CD4-positive, alpha-beta T cell (primary cell): ENCODE measurements at regions of chr16 and their contacts with region 1.

Region 1: GRCh38 chr16:89490387-89491237 is at the start of gene ANKRD11:
- DNase-seq: peak; percentile 96 to 100 (median 98)
- ATAC-seq: peak; percentile 85
- H3K4me3 ChIP-seq: peak within 1 kb of the TSS; percentile 73
- H3K4me3 Mint-ChIP-seq: peak within 1 kb of the TSS; percentile 98
- H3K27ac ChIP-seq: peak within 1 kb of the TSS; percentile 81 to 95
- H3K27ac Mint-ChIP-seq: peak within 1 kb of the TSS; percentile 97
- H3K4me1 ChIP-seq: peaks cover 58% of the 10 kb centered on the region
- H3K4me1 Mint-ChIP-seq: peaks cover 59% of the 10 kb centered on the region
- H3K27me3 ChIP-seq: no peaks in the 10 kb centered on the region
- H3K27me3 Mint-ChIP-seq: no peaks in the 10 kb centered on the region
- CTCF ChIP-seq: no peak
- total RNA-seq, gene ANKRD11: 200 to 211 TPM

Region 2: GRCh38 chr16:88856828-88857733 is 633.5 kb before region 1 on chr16 and contains the starts of genes GALNS and TRAPPC2L:
- CTCF ChIA-PET with region 1: no interaction called
- POLR2A ChIA-PET with region 1: no interaction called
- intact Hi-C with region 1: no loop called
- DNase-seq: peak; percentile 97 to 99 (median 98)
- ATAC-seq: peak; percentile 90
- H3K4me3 ChIP-seq: peak within 1 kb of the TSS; percentile 100
- H3K4me3 Mint-ChIP-seq: peak within 1 kb of the TSS; percentile 100
- H3K27ac ChIP-seq: peak within 1 kb of the TSS; percentile 69 to 74
- H3K27ac Mint-ChIP-seq: peak within 1 kb of the TSS; percentile 99
- H3K4me1 ChIP-seq: peaks cover 47% of the 10 kb centered on the region
- H3K4me1 Mint-ChIP-seq: peaks cover 27% of the 10 kb centered on the region
- H3K27me3 ChIP-seq: no peaks in the 10 kb centered on the region
- H3K27me3 Mint-ChIP-seq: peaks cover 3% of the 10 kb centered on the region
- CTCF ChIP-seq: no peak
- total RNA-seq, gene GALNS: 18.4 to 19.7 TPM
- total RNA-seq, gene TRAPPC2L: 48.0 to 48.2 TPM

Region 3: DNA sequence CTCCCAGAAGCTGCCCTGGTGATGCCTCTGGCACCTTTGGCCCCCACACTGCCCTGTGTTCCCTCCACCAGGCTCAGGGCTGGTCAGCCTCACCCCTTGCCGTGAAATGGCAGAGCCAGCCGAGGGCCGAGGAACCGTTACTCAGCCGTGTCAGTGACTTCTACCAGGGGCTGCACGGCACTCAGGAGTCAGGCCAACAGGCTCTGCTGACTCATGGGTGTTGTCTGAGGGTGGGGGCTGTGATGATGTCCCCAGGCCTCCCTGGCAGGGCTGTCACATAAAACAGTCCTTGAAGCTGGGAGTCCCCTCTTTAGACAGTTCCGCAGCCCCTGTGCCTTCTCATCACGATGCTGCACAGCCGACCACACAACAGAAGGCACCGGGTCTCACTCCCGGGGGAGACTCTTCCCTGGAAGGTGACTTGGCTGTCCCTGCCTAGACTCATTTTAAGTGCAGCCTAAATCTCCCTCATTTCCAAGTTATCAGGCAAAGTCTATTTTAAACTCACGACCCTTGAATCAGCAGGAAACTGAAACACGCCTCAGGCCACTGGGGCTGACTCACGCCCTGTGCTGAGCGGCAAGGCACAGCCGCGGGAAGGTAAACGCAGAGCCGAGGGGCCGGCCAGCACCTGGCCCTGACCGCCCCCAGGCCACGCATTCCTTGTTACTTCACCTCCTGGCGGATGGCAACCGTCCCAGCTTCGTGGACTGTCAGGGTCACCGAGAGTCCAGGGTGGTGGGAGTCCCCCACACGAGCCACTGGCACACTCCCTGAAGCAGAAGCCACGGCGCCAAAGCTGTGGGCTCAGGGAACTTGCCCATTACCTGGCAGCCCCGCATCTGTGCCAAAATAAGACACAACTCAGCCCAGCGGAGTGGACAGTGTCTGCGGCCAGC is 170.5 kb before region 1 on chr16:
- CTCF ChIA-PET with region 1: no interaction called
- POLR2A ChIA-PET with region 1: interaction called, 10 read pairs
- intact Hi-C with region 1: loop called in 1 of 2 experiments (anchors 5 kb)
- DNase-seq: peak in 5 of 14 experiments; percentile 21 to 55 (median 45)
- ATAC-seq: no peak
- H3K4me3 ChIP-seq: no peak overlapping the region
- H3K4me3 Mint-ChIP-seq: peak overlapping the region; percentile 38
- H3K27ac ChIP-seq: no peak overlapping the region
- H3K27ac Mint-ChIP-seq: peak overlapping the region; percentile 98
- H3K4me1 ChIP-seq: peaks cover 100% of the 10 kb centered on the region
- H3K4me1 Mint-ChIP-seq: peaks cover 91% of the 10 kb centered on the region
- H3K27me3 ChIP-seq: no peaks in the 10 kb centered on the region
- H3K27me3 Mint-ChIP-seq: no peaks in the 10 kb centered on the region
- CTCF ChIP-seq: no peak

Region 4: DNA sequence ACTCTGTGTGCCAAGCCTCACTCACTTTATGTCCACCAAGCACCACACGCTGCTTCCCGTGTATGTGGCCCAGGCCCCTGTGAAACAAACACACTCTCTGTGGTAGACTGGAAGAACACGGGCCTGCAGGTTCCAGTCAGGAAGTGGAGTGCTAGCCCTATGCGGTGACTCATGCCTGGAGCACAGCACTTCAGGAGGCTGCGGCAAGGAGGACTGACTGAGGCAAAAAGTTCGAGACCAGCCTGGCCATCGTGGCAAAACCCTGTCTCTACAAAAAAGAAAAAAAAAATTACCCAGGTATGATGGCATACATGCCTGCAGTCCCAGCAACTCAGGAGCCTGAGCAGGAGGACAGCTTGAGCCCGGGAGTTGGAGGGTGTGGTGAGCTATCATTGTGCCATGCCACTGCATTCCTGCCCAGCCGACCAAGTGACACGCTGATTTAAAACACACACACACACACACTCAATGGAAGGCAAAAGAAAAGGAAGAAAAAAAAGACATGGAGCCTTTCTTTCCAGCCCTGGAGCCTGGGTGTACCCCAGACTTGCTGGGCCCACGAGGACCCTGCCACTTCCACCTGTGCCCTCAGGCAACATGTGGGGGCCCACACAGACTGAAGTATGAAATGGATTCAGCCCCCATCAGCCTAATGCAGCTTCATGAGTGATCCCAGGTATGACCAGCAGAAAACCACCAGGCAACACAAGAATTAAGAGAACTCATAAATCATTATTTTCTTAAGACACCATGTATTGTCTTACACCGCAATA is 126.8 kb before region 1 on chr16:
- CTCF ChIA-PET with region 1: no interaction called
- POLR2A ChIA-PET with region 1: interaction called, 12 read pairs
- intact Hi-C with region 1: no loop called
- DNase-seq: peak in 12 of 14 experiments; percentile 25 to 77 (median 42)
- ATAC-seq: peak; percentile 21
- H3K4me3 ChIP-seq: no peak overlapping the region
- H3K4me3 Mint-ChIP-seq: peak overlapping the region; percentile 25
- H3K27ac ChIP-seq: peak overlapping the region in 1 of 2 donors; percentile 23
- H3K27ac Mint-ChIP-seq: peak overlapping the region; percentile 75
- H3K4me1 ChIP-seq: peaks cover 94% of the 10 kb centered on the region
- H3K4me1 Mint-ChIP-seq: peaks cover 96% of the 10 kb centered on the region
- H3K27me3 ChIP-seq: no peaks in the 10 kb centered on the region
- H3K27me3 Mint-ChIP-seq: no peaks in the 10 kb centered on the region
- CTCF ChIP-seq: no peak

Region 5: GRCh38 chr16:89466920-89467319 is 23.7 kb before region 1 on chr16:
- CTCF ChIA-PET with region 1: interaction called, 5 read pairs
- POLR2A ChIA-PET with region 1: interaction called, 12 read pairs
- intact Hi-C with region 1: loop called in 1 of 2 experiments (anchors 2 kb)
- DNase-seq: no peak
- ATAC-seq: no peak
- H3K4me3 ChIP-seq: no peak overlapping the region
- H3K4me3 Mint-ChIP-seq: peak overlapping the region; percentile 48
- H3K27ac ChIP-seq: no peak overlapping the region
- H3K27ac Mint-ChIP-seq: peak overlapping the region; percentile 63
- H3K4me1 ChIP-seq: peaks cover 67% of the 10 kb centered on the region
- H3K4me1 Mint-ChIP-seq: peaks cover 66% of the 10 kb centered on the region
- H3K27me3 ChIP-seq: no peaks in the 10 kb centered on the region
- H3K27me3 Mint-ChIP-seq: no peaks in the 10 kb centered on the region
- CTCF ChIP-seq: no peak

Region 6: DNA sequence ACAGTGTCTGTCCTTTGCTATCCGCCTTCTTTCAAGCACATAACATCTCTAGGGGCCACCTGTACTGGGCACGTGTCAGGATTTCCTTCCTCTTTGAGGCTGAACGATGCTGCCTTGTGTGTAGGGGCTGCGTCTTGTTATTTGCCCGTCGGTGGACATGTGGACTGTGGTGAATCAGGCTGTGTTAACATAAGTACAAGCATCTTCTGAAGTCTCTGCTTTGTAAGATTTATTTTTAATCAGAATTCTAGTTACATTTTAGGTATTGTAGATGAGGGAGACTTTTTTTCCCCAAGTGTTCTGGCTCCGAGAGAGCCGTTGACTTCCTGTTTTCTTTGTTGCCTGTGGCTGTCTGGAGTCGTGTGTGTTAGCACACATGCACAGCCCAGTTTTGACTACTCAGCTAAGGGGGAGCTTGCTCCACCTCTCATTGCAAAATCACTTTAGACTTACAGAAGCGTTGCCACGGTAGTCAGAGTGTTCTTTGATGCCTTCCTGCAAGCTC is 43.7 kb after region 1 on chr16:
- CTCF ChIA-PET with region 1: no interaction called
- POLR2A ChIA-PET with region 1: interaction called, 7 read pairs
- intact Hi-C with region 1: loop called in 1 of 2 experiments (anchors 2 kb)
- DNase-seq: peak; percentile 25 to 81 (median 48)
- ATAC-seq: peak; percentile 96
- H3K4me3 ChIP-seq: no peak overlapping the region
- H3K4me3 Mint-ChIP-seq: peak overlapping the region; percentile 59
- H3K27ac ChIP-seq: peak overlapping the region; percentile 21 to 51
- H3K27ac Mint-ChIP-seq: peak overlapping the region; percentile 92
- H3K4me1 ChIP-seq: peaks cover 34% of the 10 kb centered on the region
- H3K4me1 Mint-ChIP-seq: peaks cover 23% of the 10 kb centered on the region
- H3K27me3 ChIP-seq: no peaks in the 10 kb centered on the region
- H3K27me3 Mint-ChIP-seq: no peaks in the 10 kb centered on the region
- CTCF ChIP-seq: no peak